Pancreas (tissue), 10 donors: ENCODE measurements at regions of chr20 and their contacts with region 1.

Region 1: GRCh38 chr20:35207950-35208611 is 18.4 kb upstream of the MMP24 start:
- DNase-seq: peak in 5 of 6 donors; percentile 71 to 83 (median 75)
- ATAC-seq: peak; percentile 97 to 100 (median 98)
- H3K4me3 ChIP-seq: peak overlapping the region in 1 of 4 donors; percentile 21
- H3K27ac ChIP-seq: peak overlapping the region in 3 of 4 donors; percentile 36 to 63 (median 61)
- H3K4me1 ChIP-seq: peaks cover 0 to 5% (median 0%) of the 10 kb centered on the region in 3 donors
- H3K27me3 ChIP-seq: no peaks in the 10 kb centered on the region
- CTCF ChIP-seq: peak; percentile 49 to 73 (median 62)

Region 2: DNA sequence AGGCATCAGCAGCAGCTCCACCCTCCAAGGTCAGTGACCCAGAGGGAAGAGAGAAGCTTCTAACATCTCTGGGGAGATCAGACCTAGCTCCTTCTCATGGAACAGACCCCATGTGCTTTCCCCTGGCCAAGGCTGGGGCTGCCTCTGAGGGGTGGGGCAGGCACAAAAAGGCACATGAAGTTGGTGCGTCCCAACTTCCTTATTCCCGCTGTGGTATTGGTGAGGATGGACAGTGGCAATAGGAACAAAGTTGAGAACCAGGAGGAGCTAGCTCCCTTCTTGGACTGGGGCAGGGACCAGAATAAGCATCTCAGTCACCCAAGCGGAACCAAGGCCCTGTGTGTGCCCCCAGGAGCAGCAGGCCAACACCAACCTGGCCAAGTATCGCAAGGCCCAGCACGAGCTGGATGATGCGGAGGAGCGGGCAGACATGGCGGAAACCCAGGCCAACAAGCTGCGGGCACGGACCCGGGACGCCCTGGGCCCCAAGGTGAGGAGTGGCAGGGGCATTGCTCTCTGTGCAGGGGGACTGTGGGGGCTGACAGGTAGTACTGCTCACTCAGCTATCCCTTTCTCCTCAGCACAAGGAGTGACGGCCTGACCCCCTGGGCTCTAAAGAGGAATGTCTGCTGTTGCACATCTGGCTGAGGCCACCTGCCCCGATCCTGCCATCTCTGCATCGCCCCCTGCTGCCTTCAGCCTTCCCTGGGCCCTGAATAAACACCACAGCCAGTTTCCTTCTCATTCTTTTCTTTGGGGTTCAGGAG is 206.3 kb before region 1 on chr20:
- intact Hi-C with region 1: no loop called
- DNase-seq: peak in 2 of 6 donors; percentile 17 to 52
- ATAC-seq: no peak
- H3K4me3 ChIP-seq: no peak overlapping the region
- H3K27ac ChIP-seq: no peak overlapping the region
- H3K4me1 ChIP-seq: no peaks in the 10 kb centered on the region
- H3K27me3 ChIP-seq: no peaks in the 10 kb centered on the region
- CTCF ChIP-seq: no peak

Region 3: DNA sequence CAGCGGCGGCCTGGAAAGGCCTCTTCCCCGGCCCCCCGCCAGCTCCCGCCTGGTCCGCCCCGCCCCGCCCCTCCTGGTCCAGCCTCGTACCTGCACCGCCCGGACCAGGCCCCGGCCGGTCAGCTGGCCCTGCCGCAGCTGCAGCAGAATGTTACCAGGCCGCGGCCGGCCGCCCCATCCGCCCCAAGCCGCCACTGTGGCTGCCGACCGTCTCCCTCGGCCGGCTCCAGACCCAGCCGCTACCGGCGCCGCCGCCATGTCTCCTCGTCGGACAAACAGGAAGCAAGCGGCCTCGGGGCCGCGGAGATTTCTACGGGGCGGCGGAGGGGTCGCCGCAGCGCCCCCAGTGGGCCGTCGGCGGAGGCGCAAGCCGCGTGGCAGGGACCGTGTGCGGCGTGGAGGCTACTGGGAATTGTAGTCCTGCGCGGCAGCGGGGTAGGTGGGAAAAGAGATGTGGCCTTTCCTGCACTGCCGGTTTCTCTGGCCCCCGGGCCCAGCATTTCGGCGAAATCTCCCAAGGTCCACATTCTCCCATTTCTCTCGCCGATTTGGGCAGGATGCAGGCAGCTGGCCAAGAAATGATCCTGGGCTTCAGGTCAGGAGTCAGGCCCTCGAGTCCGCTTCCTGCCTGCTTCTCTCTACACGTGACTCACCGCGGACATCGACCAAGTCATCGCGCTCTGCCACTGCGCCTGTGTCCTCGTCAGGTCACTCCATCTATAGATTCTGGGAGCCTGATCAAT is 115.4 kb before region 1 on chr20 and contains the start of gene TRPC4AP:
- intact Hi-C with region 1: loop called in 1 of 3 experiments (anchors 10 kb)
- DNase-seq: peak; percentile 82 to 96 (median 89)
- ATAC-seq: peak; percentile 96 to 97 (median 97)
- H3K4me3 ChIP-seq: peak within 1 kb of the TSS; percentile 70 to 94 (median 80)
- H3K27ac ChIP-seq: peak within 1 kb of the TSS; percentile 71 to 91 (median 82)
- H3K4me1 ChIP-seq: peaks cover 0 to 25% (median 3%) of the 10 kb centered on the region in 3 donors
- H3K27me3 ChIP-seq: no peaks in the 10 kb centered on the region
- CTCF ChIP-seq: peak; percentile 95 to 99 (median 98)
- total RNA-seq, gene TRPC4AP: 30.7 to 40.7 (median 33.2) TPM

Region 4: GRCh38 chr20:35144694-35145093 is 63.4 kb before region 1 on chr20:
- intact Hi-C with region 1: loop called in 1 of 3 experiments (anchors 5 kb)
- DNase-seq: no peak
- ATAC-seq: no peak
- H3K4me3 ChIP-seq: no peak overlapping the region
- H3K27ac ChIP-seq: no peak overlapping the region
- H3K4me1 ChIP-seq: peaks cover 0 to 19% (median 4%) of the 10 kb centered on the region in 3 donors
- H3K27me3 ChIP-seq: no peaks in the 10 kb centered on the region
- CTCF ChIP-seq: no peak

Region 5: DNA sequence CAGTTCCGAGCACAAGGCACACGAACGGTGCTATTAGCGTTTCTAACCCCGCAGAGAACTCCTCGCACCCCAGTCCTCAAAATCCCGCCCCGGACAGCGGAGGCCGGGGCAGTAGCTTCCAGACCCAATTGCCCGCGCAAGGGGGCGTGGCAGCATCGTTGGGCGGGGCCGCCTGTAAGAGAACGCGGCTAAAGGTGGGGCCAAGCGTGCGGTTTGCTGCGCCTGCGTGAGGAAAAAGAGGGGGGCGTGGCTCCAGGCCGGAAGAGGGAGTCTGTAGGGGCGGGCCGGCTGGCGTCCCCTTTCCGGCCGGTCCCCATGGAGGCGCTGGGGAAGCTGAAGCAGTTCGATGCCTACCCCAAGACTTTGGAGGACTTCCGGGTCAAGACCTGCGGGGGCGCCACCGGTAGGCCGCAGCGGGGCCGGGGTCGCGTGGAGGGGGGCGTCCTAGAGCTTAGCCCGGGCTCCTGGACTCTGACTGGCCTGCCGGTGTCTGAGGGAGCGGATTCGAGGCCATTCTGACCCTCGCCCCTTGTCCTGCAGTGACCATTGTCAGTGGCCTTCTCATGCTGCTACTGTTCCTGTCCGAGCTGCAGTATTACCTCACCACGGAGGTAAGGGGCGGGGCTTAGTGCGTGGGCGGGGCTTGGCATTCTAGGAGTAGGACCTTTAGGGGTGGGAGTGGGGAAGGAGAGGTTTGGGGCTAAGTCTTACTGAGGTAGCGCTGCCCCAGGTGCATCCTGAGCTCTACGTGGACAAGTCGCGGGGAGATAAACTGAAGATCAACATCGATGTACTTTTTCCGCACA is 333.9 kb after region 1 on chr20 and contains the start of gene ERGIC3:
- intact Hi-C with region 1: no loop called
- DNase-seq: peak; percentile 96 to 99 (median 98)
- ATAC-seq: peak; percentile 100
- H3K4me3 ChIP-seq: peak within 1 kb of the TSS; percentile 78 to 96 (median 91)
- H3K27ac ChIP-seq: peak within 1 kb of the TSS; percentile 68 to 79 (median 76)
- H3K4me1 ChIP-seq: peaks cover 0 to 8% (median 0%) of the 10 kb centered on the region in 3 donors
- H3K27me3 ChIP-seq: no peaks in the 10 kb centered on the region
- CTCF ChIP-seq: no peak
- total RNA-seq, gene ERGIC3: 112 to 167 (median 124) TPM